Dendritic cell treated with granulocyte-macrophage colony-stimulating factor and Interleukin-4, amounts not matched to agents 40 ng/mL and 50 ng/mL, for 4 days (primary cell): ENCODE measurements at regions of chr17 and their contacts with region 1.

Region 1: DNA sequence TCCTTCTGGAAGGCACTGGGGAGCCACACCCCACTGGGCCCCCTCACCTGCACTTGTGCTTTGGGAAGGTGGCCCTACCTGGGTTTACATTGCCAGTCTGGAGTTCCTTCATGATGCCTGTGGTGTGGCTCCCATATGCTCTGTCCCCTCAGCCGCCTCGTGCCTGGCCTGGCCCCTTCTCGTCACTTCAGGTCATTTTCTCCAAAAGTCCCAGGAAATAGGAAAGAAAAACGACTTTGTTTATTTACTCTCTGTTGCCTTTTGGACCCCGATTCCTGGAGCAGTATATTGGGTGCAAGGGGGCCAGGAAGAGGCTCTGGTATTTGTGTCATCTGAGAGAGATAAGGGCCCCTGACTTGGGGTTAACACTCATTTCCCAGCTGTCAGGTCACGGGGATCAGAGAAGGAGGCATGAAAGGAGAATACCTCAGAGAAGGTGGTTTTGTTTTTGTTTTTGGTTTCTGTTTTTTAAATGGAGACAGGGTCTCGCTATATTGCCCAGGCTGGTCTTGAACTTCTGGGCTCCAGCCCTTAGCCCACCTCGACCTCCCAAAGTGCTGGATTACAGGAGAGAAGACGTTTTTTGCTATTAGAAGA is 4.7 kb downstream of the SOCS3 start:
- H3K4me3 Mint-ChIP-seq: no peak overlapping the region
- H3K27ac Mint-ChIP-seq: peak overlapping the region; percentile 94
- H3K4me1 Mint-ChIP-seq: peaks cover 84% of the 10 kb centered on the region
- H3K27me3 Mint-ChIP-seq: no peaks in the 10 kb centered on the region

Region 2: GRCh38 chr17:78197147-78197832 is 157.9 kb before region 1 on chr17:
- intact Hi-C with region 1: no loop called
- H3K4me3 Mint-ChIP-seq: no peak overlapping the region
- H3K27ac Mint-ChIP-seq: peak overlapping the region; percentile 90
- H3K4me1 Mint-ChIP-seq: peaks cover 32% of the 10 kb centered on the region
- H3K27me3 Mint-ChIP-seq: no peaks in the 10 kb centered on the region

Region 3: GRCh38 chr17:78337244-78338109 is 17.7 kb before region 1 on chr17:
- intact Hi-C with region 1: loop called (anchors 2 kb)
- H3K4me3 Mint-ChIP-seq: no peak overlapping the region
- H3K27ac Mint-ChIP-seq: peak overlapping the region; percentile 74
- H3K4me1 Mint-ChIP-seq: peaks cover 61% of the 10 kb centered on the region
- H3K27me3 Mint-ChIP-seq: peaks cover 5% of the 10 kb centered on the region